ENCODE measurements at regions of chr10 and their contacts with region 1.

Region 1: GRCh38 chr10:70363971-70364771 is 18.3 kb downstream of the LRRC20 start:
- DNase-seq: peak; percentile 95
- ATAC-seq: peak; percentile 98

Region 2: GRCh38 chr10:70221030-70221429 is 143.1 kb before region 1 on chr10:
- intact Hi-C with region 1: loop called (anchors 1 to 5 kb)
- DNase-seq: no peak
- ATAC-seq: no peak

Region 3: GRCh38 chr10:70267161-70267933 is 96.8 kb before region 1 on chr10:
- intact Hi-C with region 1: loop called (anchors 5 to 10 kb)
- DNase-seq: no peak
- ATAC-seq: peak in 1 of 2 donors; percentile 81

Region 4: GRCh38 chr10:70430493-70431445 is 66.6 kb after region 1 on chr10:
- intact Hi-C with region 1: no loop called
- DNase-seq: peak; percentile 67
- ATAC-seq: peak; percentile 72 to 87

Region 5: DNA sequence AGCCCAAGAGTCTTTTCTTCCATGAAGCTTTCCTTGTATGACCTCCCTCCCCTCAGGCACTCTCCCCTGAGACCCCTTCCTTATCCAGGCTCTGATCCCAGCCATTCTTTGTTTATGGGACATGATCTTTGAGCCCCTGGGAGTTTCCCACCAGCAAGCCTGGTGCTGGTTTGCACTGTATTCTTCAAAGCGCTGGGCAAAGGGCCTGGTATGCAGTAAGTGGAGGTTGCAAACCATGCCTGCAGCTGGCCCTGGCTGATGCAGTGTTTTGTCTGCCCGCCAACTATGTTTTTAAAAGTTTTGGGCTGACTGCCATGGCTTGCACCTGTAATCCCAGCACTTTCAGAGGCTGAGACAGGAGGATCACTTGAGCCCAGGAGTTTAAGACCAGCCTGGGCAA is 84.1 kb after region 1 on chr10:
- intact Hi-C with region 1: no loop called
- DNase-seq: no peak
- ATAC-seq: no peak